ENCODE measurements at regions of chr6 and their contacts with region 1.

Region 1: DNA sequence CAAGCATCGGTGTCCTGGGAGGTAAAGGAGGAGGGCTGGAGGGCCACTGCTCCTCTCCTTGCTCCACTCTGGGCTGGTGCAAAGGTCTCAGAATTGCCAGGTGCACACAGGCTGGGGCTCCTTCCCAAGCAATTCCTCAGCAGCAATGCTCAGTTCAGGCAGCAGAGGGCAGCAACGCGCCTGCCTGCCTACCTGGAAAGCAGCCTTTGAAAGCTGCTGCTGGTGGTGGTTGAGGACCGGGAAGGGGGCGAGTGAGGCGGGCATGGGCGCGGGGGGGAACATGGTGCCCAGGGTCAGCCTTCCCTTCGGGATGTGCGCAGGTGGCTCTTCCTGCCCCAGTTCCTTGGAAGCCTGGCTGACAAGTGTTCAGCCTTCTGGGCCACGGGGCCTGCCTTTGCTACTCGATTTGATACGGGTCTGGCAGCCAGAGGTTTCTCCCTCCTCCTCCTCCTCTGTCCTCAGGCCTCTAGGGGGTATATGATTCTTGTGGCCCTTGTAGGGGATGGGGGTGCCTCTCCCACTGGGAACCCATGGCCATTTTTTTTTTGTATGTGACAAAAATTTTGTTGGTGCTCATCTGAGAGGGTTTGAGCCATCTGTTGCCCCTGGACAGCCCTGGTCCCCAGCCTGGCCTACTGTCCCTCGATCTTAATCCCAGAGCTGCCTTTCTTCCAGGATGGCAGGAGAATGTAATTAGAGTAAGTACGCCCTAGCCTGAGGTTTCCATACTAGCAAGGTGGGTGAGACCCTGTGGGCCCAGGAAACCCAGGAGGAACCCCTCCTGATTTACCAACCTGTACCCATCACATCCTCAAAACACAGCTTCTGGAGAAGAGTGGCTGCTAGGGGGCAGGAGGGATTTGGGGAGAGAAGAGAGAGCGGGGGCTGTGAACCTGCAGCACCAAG is 20.1 kb downstream of the MRPS18A start:
- DNase-seq: peak; percentile 81
- H3K4me3 ChIP-seq: no peak overlapping the region
- H3K27ac ChIP-seq: no peak overlapping the region
- H3K4me1 ChIP-seq: peaks cover 5% of the 10 kb centered on the region
- H3K27me3 ChIP-seq: no peaks in the 10 kb centered on the region
- CTCF ChIP-seq: peak; percentile 91 to 98
- POLR2A ChIP-seq: no peak

Region 2: GRCh38 chr6:42322676-42323075 is 1344.8 kb before region 1 on chr6:
- CTCF ChIA-PET with region 1: no interaction called
- POLR2A ChIA-PET with region 1: no interaction called
- dilution Hi-C with region 1: no loop called
- intact Hi-C with region 1: no loop called
- DNase-seq: no peak
- H3K4me3 ChIP-seq: no peak overlapping the region
- H3K27ac ChIP-seq: no peak overlapping the region
- H3K4me1 ChIP-seq: no peaks in the 10 kb centered on the region
- H3K27me3 ChIP-seq: peaks cover 0 to 2% of the 10 kb centered on the region in 2 experiments
- CTCF ChIP-seq: no peak
- POLR2A ChIP-seq: no peak

Region 3: DNA sequence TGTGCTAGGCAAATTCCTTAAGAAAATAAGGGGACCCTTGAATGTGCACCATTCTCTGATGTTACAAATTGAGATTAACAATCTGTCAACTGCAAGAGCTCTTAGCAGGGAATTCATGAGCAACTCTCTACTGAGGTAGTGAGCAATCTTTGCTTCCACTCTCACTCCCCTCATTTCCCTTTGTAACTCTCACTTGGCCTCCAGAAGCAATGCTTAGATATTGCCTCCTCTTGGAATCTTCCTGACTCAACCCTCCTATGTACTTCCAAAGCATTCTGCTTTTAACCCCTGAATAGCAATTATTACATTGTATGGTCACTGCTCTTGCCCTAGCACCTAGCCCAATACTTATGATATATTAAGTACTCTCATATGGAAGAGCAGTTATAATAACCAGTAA is 108.2 kb before region 1 on chr6:
- CTCF ChIA-PET with region 1: no interaction called
- POLR2A ChIA-PET with region 1: no interaction called
- dilution Hi-C with region 1: no loop called
- intact Hi-C with region 1: no loop called
- DNase-seq: no peak
- H3K4me3 ChIP-seq: no peak overlapping the region
- H3K27ac ChIP-seq: no peak overlapping the region
- H3K4me1 ChIP-seq: no peaks in the 10 kb centered on the region
- H3K27me3 ChIP-seq: no peaks in the 10 kb centered on the region
- CTCF ChIP-seq: no peak
- POLR2A ChIP-seq: no peak

Region 4: GRCh38 chr6:43608310-43608763 is 59.2 kb before region 1 on chr6:
- CTCF ChIA-PET with region 1: interaction called, 10 read pairs
- POLR2A ChIA-PET with region 1: interaction called, 7 read pairs
- dilution Hi-C with region 1: no loop called
- intact Hi-C with region 1: loop called (anchors 1 kb)
- DNase-seq: peak; percentile 82
- H3K4me3 ChIP-seq: no peak overlapping the region
- H3K27ac ChIP-seq: no peak overlapping the region
- H3K4me1 ChIP-seq: peaks cover 2% of the 10 kb centered on the region
- H3K27me3 ChIP-seq: no peaks in the 10 kb centered on the region
- CTCF ChIP-seq: peak; percentile 84 to 89
- POLR2A ChIP-seq: no peak

Region 5: DNA sequence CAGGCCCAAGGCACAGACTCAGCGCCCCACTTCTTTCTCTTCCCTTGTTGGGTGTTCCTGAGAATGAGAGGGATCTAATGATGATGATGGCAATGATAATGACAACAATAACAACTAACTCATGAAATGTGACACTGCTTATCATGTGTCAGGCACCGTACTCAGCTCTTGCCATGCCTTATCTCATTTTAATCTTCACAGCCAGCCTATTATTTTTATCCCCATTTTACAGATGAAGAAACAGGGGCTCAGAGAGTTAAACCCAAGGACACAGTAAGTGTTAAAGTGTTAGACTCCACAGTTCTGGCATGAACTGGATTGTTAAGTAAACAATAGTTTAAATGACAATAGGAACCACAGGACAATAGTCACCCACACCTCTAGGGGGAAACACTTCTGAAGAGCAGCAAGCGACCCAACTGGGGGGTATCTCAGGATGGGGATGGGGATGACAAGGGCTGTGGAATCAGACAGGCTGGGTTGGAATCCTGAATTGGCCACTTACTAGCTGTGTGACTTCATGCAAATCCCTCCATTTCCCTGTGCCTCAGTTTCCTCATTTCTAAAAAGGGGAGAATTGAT is 10.2 kb before region 1 on chr6:
- CTCF ChIA-PET with region 1: interaction called, 13 read pairs
- POLR2A ChIA-PET with region 1: no interaction called
- dilution Hi-C with region 1: no loop called
- intact Hi-C with region 1: no loop called
- DNase-seq: no peak
- H3K4me3 ChIP-seq: no peak overlapping the region
- H3K27ac ChIP-seq: no peak overlapping the region
- H3K4me1 ChIP-seq: no peaks in the 10 kb centered on the region
- H3K27me3 ChIP-seq: no peaks in the 10 kb centered on the region
- CTCF ChIP-seq: no peak
- POLR2A ChIP-seq: no peak

Region 6: DNA sequence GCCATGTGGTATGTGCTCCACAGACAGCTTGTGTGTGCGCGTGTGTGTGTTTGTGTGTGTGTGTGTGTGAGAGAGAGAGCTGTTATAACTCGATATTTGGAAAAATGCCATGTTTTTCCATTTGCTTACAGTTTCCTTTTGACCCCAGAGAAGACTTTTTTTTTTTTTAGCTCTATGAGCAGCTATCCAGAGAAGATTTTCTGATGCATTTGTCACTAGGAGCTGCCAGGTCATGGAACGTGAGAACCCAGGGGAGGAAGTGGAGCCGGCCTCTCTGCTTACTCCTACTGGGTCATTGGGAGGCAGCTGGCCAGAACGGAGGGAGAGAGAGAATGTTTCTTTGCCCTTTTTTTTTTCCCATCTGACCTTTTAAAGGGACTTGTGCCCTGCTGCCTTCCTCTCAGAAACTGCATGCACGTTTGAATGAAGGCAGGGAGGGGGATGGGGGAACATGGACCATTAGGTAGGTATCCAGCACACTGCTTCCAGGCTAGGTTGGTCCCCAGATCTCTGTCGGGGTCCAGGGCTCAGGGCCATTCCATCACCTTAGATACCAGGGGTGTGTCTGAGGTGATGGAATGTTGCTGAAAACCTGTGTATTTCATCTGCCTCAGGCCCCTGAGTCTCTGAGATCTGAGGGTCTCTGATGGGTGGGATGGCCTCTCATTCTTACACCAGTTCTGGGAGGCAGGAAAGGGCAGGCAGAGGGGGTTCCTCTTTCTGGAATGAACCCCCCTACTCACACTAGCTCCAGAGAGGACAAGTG is 31.3 kb after region 1 on chr6:
- CTCF ChIA-PET with region 1: interaction called, 19 read pairs
- POLR2A ChIA-PET with region 1: no interaction called
- dilution Hi-C with region 1: no loop called
- intact Hi-C with region 1: no loop called
- DNase-seq: peak; percentile 91
- H3K4me3 ChIP-seq: no peak overlapping the region
- H3K27ac ChIP-seq: peak overlapping the region; percentile 75
- H3K4me1 ChIP-seq: peaks cover 43% of the 10 kb centered on the region
- H3K27me3 ChIP-seq: no peaks in the 10 kb centered on the region
- CTCF ChIP-seq: no peak
- POLR2A ChIP-seq: no peak

Region 7: GRCh38 chr6:43723737-43724295 is 56.3 kb after region 1 on chr6:
- CTCF ChIA-PET with region 1: interaction called, 6 read pairs
- POLR2A ChIA-PET with region 1: no interaction called
- dilution Hi-C with region 1: no loop called
- intact Hi-C with region 1: loop called (anchors 1 kb)
- DNase-seq: peak; percentile 56
- H3K4me3 ChIP-seq: no peak overlapping the region
- H3K27ac ChIP-seq: no peak overlapping the region
- H3K4me1 ChIP-seq: no peaks in the 10 kb centered on the region
- H3K27me3 ChIP-seq: no peaks in the 10 kb centered on the region
- CTCF ChIP-seq: peak; percentile 61 to 73
- POLR2A ChIP-seq: no peak

Region 8: DNA sequence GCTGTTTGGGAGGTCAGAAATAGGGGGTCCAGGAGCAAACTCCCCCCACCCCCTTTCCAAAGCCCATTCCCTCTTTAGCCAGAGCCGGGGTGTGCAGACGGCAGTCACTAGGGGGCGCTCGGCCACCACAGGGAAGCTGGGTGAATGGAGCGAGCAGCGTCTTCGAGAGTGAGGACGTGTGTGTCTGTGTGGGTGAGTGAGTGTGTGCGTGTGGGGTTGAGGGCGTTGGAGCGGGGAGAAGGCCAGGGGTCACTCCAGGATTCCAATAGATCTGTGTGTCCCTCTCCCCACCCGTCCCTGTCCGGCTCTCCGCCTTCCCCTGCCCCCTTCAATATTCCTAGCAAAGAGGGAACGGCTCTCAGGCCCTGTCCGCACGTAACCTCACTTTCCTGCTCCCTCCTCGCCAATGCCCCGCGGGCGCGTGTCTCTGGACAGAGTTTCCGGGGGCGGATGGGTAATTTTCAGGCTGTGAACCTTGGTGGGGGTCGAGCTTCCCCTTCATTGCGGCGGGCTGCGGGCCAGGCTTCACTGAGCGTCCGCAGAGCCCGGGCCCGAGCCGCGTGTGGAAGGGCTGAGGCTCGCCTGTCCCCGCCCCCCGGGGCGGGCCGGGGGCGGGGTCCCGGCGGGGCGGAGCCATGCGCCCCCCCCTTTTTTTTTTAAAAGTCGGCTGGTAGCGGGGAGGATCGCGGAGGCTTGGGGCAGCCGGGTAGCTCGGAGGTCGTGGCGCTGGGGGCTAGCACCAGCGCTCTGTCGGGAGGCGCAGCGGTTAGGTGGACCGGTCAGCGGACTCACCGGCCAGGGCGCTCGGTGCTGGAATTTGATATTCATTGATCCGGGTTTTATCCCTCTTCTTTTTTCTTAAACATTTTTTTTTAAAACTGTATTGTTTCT is 102.3 kb after region 1 on chr6 and contains the start of gene VEGFA:
- CTCF ChIA-PET with region 1: interaction called, 90 read pairs
- POLR2A ChIA-PET with region 1: interaction called, 3 read pairs
- dilution Hi-C with region 1: no loop called
- intact Hi-C with region 1: loop called (anchors 1 kb)
- DNase-seq: peak; percentile 86
- H3K4me3 ChIP-seq: peak within 1 kb of the TSS; percentile 75 to 86 (median 81)
- H3K27ac ChIP-seq: peak within 1 kb of the TSS; percentile 71
- H3K4me1 ChIP-seq: peaks cover 18% of the 10 kb centered on the region
- H3K27me3 ChIP-seq: no peaks in the 10 kb centered on the region
- CTCF ChIP-seq: peak; percentile 96 to 98
- POLR2A ChIP-seq: peak; percentile 33
- total RNA-seq, gene VEGFA: 16.6 and 18.1 TPM in 2 replicates

Region 9: GRCh38 chr6:43838276-43839036 is 171.0 kb after region 1 on chr6:
- CTCF ChIA-PET with region 1: no interaction called
- POLR2A ChIA-PET with region 1: no interaction called
- dilution Hi-C with region 1: no loop called
- intact Hi-C with region 1: loop called (anchors 5 kb)
- DNase-seq: peak; percentile 31
- H3K4me3 ChIP-seq: no peak overlapping the region
- H3K27ac ChIP-seq: no peak overlapping the region
- H3K4me1 ChIP-seq: no peaks in the 10 kb centered on the region
- H3K27me3 ChIP-seq: peaks cover 4 to 10% of the 10 kb centered on the region in 2 experiments
- CTCF ChIP-seq: peak; percentile 28 to 58
- POLR2A ChIP-seq: no peak

Region 10: DNA sequence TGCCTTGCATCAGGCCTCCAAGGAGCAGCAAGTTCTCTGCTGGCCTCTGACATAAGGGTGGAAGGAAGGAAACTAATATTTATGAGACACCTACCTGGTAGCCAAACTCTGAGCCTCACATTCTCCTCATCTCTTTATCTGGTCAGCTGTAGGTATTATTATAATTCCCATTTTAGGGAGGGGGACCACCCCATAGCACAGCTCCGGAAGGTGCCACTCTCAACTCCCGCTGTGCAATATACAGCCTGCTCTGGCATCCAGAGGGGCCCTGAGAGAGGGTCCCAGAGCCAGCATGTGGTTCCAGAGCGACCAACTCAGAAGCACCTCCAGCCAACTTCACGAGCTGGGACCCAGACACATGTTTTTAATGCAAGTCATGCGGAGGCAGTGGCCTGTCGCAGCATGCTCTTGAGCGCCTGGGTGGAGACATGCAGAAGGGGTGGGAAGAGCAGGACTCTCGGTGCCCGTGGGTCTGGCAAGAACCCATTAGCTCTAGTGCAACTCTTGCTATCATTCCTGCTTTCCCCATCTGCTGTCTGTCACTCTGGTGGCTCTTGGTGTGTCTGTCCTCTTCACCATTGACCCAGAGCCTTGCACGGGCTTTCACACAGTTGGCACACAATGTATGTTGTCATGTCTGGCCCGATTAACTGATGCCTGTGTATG is 534.3 kb after region 1 on chr6:
- CTCF ChIA-PET with region 1: no interaction called
- POLR2A ChIA-PET with region 1: no interaction called
- dilution Hi-C with region 1: no loop called
- intact Hi-C with region 1: no loop called
- DNase-seq: no peak
- H3K4me3 ChIP-seq: no peak overlapping the region
- H3K27ac ChIP-seq: no peak overlapping the region
- H3K4me1 ChIP-seq: peaks cover 14% of the 10 kb centered on the region
- H3K27me3 ChIP-seq: no peaks in the 10 kb centered on the region
- CTCF ChIP-seq: no peak
- POLR2A ChIP-seq: no peak